ENCODE measurements at regions of chr17 and their contacts with region 1.

Region 1: DNA sequence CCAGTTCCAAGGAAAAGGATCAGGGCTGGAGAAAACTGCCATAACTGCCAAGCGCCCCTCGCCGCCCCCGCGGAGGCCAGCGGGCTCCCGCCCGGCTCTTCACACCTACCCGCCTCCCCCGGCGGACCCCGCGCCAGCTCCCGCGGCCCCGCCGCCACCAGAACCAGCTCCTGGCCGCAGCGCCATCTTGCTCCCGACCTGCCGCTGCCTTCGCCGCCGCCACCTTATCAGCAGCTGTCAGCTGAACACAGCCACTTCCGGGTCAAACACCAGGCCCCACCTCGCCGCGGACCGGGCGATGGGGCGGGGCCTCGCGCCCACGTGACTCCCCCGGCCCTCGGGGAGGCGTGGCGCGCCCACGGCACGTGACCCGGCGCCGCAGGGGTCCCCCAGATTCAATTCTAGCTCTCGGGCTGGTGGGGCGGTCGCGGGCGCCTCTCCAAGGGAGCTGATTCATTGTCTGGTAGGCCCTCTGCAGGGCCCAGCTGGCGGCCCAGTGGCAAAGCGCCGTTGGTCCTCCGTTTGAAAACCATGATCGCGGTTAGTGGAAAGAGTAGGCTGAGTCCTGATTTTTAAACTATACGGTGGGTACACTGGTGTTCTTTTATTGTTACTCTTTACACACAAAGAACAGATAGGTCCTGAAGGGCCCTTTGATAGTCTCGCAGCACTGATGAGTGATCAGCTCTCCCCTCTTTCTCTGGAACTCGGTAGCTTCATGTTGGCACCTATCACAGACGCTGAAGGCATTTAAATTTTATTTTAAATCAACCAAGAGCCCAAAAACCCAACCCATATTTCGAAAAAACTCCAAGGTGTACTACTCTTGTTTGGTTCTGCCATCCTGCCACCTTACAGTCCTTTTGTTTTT is at the start of gene SYNRG:
- DNase-seq: peak; percentile 96
- ATAC-seq: peak; percentile 82
- H3K4me3 Mint-ChIP-seq: peak within 1 kb of the TSS; percentile 85
- H3K27ac Mint-ChIP-seq: peak within 1 kb of the TSS; percentile 98
- H3K4me1 Mint-ChIP-seq: peaks cover 37% of the 10 kb centered on the region
- H3K27me3 Mint-ChIP-seq: no peaks in the 10 kb centered on the region
- total RNA-seq, gene SYNRG: 39.0 to 46.7 TPM

Region 2: GRCh38 chr17:36601303-36602029 is 1007.9 kb before region 1 on chr17 and contains the start of gene MRM1:
- CTCF ChIA-PET with region 1: no interaction called
- POLR2A ChIA-PET with region 1: no interaction called
- intact Hi-C with region 1: loop called in 1 of 2 experiments (anchors 5 kb)
- DNase-seq: peak; percentile 93
- ATAC-seq: peak; percentile 86
- H3K4me3 Mint-ChIP-seq: peak within 1 kb of the TSS; percentile 89
- H3K27ac Mint-ChIP-seq: peak within 1 kb of the TSS; percentile 92
- H3K4me1 Mint-ChIP-seq: peaks cover 33% of the 10 kb centered on the region
- H3K27me3 Mint-ChIP-seq: no peaks in the 10 kb centered on the region
- total RNA-seq, gene MRM1: 14.3 to 16.4 TPM

Region 3: GRCh38 chr17:37406635-37407461 is 202.6 kb before region 1 on chr17 and contains the starts of genes ACACA and TADA2A:
- CTCF ChIA-PET with region 1: no interaction called
- POLR2A ChIA-PET with region 1: no interaction called
- intact Hi-C with region 1: loop called (anchors 1 to 5 kb)
- DNase-seq: peak; percentile 88
- ATAC-seq: peak; percentile 93
- H3K4me3 Mint-ChIP-seq: peak within 1 kb of the TSS; percentile 99
- H3K27ac Mint-ChIP-seq: peak within 1 kb of the TSS; percentile 98
- H3K4me1 Mint-ChIP-seq: peaks cover 46% of the 10 kb centered on the region
- H3K27me3 Mint-ChIP-seq: no peaks in the 10 kb centered on the region
- total RNA-seq, gene ACACA: 57.2 to 61.1 TPM
- total RNA-seq, gene TADA2A: 29.9 to 32.9 TPM

Region 4: GRCh38 chr17:37541880-37542660 is 67.3 kb before region 1 on chr17:
- CTCF ChIA-PET with region 1: no interaction called
- POLR2A ChIA-PET with region 1: no interaction called
- intact Hi-C with region 1: loop called in 1 of 2 experiments (anchors 5 kb)
- DNase-seq: no peak
- ATAC-seq: peak; percentile 42
- H3K4me3 Mint-ChIP-seq: no peak overlapping the region
- H3K27ac Mint-ChIP-seq: peak overlapping the region; percentile 76
- H3K4me1 Mint-ChIP-seq: peaks cover 15% of the 10 kb centered on the region
- H3K27me3 Mint-ChIP-seq: no peaks in the 10 kb centered on the region

Region 5: GRCh38 chr17:37643118-37643766 is 33.8 kb after region 1 on chr17 and contains the start of gene DDX52:
- CTCF ChIA-PET with region 1: no interaction called
- POLR2A ChIA-PET with region 1: no interaction called
- intact Hi-C with region 1: loop called (anchors 1 to 2 kb)
- DNase-seq: peak; percentile 93
- ATAC-seq: peak; percentile 99
- H3K4me3 Mint-ChIP-seq: peak within 1 kb of the TSS; percentile 94
- H3K27ac Mint-ChIP-seq: peak within 1 kb of the TSS; percentile 91
- H3K4me1 Mint-ChIP-seq: peaks cover 25% of the 10 kb centered on the region
- H3K27me3 Mint-ChIP-seq: peaks cover 24% of the 10 kb centered on the region
- total RNA-seq, gene DDX52: 34.6 to 41.7 TPM

Region 6: GRCh38 chr17:38799378-38800236 is 1190.2 kb after region 1 on chr17 and contains the start of gene PIP4K2B:
- CTCF ChIA-PET with region 1: no interaction called
- POLR2A ChIA-PET with region 1: no interaction called
- intact Hi-C with region 1: loop called in 1 of 2 experiments (anchors 2 kb)
- DNase-seq: peak; percentile 93
- ATAC-seq: peak; percentile 83
- H3K4me3 Mint-ChIP-seq: peak within 1 kb of the TSS; percentile 99
- H3K27ac Mint-ChIP-seq: peak within 1 kb of the TSS; percentile 94
- H3K4me1 Mint-ChIP-seq: peaks cover 33% of the 10 kb centered on the region
- H3K27me3 Mint-ChIP-seq: no peaks in the 10 kb centered on the region
- total RNA-seq, gene PIP4K2B: 36.3 to 41.6 TPM